ENCODE measurements at regions of chr2 and their contacts with region 1.

Region 1: GRCh38 chr2:40528563-40528962 is 76.7 kb upstream of the SLC8A1 start:
- DNase-seq: no peak
- ATAC-seq: no peak
- H3K4me3 ChIP-seq: no peak overlapping the region
- H3K27ac ChIP-seq: no peak overlapping the region
- H3K4me1 ChIP-seq: no peaks in the 10 kb centered on the region
- H3K27me3 ChIP-seq: no peaks in the 10 kb centered on the region
- CTCF ChIP-seq: no peak
- POLR2A ChIP-seq: no peak
- RAD21 ChIP-seq: no peak

Region 2: DNA sequence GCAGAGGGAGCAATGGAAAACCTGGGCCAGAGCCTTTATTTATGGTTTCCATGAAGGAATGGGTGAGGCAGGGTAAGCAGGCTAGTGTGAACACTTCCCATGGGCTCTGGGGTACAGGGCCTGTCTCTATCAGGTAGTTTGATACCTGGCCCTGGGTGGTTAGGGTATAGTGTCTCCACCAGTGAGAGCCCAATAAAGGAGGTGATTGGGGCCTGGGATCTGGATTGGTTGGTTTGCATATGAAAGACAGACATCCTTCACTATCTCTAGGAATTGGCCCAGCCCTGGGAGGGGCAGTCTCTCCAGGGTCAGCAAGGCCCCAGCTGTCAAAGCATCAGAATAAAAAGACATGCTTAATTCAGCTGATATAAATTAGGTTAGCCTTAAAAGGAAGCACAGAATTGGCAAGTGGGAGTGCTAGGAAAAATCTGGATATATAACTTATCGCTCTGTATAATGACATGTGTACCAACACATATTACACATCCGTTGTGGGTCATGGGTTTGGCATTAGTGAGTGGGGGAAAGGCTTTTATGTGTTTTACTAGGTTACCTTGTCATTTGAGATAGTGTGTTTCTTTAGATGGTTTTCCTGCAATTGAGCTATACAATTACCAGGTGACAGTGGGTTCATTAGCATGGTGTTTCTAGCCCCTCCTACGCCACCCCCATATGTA is 881.3 kb before region 1 on chr2:
- CTCF ChIA-PET with region 1: no interaction called
- POLR2A ChIA-PET with region 1: no interaction called
- dilution Hi-C with region 1: no loop called
- in situ Hi-C with region 1: no loop called
- intact Hi-C with region 1: no loop called
- DNase-seq: no peak
- ATAC-seq: no peak
- H3K4me3 ChIP-seq: no peak overlapping the region
- H3K27ac ChIP-seq: no peak overlapping the region
- H3K4me1 ChIP-seq: no peaks in the 10 kb centered on the region; the same call in 1 of the 2 replicates
- H3K27me3 ChIP-seq: no peaks in the 10 kb centered on the region
- CTCF ChIP-seq: no peak
- POLR2A ChIP-seq: no peak
- RAD21 ChIP-seq: no peak

Region 3: DNA sequence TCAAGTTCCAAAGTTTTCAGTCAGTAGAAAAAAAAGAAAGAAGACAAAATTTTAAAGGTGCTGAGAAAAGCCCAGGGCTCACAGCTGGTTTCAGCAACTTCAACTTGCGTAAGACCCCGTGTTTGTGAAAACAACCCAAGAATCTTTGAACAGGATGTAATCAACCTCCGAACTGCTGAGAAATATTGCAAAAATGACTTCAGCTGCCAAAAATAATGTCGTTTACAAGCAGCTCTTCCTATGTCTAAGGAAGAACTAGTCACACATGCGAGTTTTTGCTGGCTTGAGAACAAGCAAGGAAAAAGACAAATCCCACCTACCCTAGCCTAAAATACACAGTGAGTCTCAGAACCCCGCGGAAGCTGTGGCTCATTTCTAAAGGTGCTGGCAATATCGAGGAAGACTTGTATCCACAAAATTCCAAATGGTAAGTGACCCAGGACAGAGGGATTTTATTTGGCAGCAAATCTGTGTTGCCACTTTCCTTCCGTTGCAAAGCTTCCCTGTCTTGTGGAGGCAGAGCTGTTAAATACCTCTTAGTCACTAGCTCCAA is 16.8 kb before region 1 on chr2:
- CTCF ChIA-PET with region 1: interaction called, 14 read pairs
- POLR2A ChIA-PET with region 1: interaction called, 3 read pairs
- dilution Hi-C with region 1: no loop called
- in situ Hi-C with region 1: no loop called
- intact Hi-C with region 1: no loop called
- DNase-seq: peak; percentile 80
- ATAC-seq: peak; percentile 75
- H3K4me3 ChIP-seq: peak overlapping the region; percentile 27
- H3K27ac ChIP-seq: peak overlapping the region; percentile 37; the same call in 1 of the 2 replicates
- H3K4me1 ChIP-seq: peaks cover 7% of the 10 kb centered on the region
- H3K27me3 ChIP-seq: no peaks in the 10 kb centered on the region
- CTCF ChIP-seq: no peak
- POLR2A ChIP-seq: no peak
- RAD21 ChIP-seq: no peak